Panc1 (cell line): ENCODE measurements at regions of chr5 and their contacts with region 1.

Region 1: GRCh38 chr5:74640450-74640953 is at the start of gene ENC1:
- DNase-seq: peak; percentile 43
- ATAC-seq: peak; percentile 85
- H3K4me3 ChIP-seq: peak within 1 kb of the TSS; percentile 79 to 88
- H3K27ac ChIP-seq: peak within 1 kb of the TSS; percentile 78
- H3K4me1 ChIP-seq: peaks cover 26% of the 10 kb centered on the region
- H3K27me3 ChIP-seq: no peaks in the 10 kb centered on the region
- CTCF ChIP-seq: peak; percentile 70
- total RNA-seq, gene ENC1: 37.0 TPM

Region 2: DNA sequence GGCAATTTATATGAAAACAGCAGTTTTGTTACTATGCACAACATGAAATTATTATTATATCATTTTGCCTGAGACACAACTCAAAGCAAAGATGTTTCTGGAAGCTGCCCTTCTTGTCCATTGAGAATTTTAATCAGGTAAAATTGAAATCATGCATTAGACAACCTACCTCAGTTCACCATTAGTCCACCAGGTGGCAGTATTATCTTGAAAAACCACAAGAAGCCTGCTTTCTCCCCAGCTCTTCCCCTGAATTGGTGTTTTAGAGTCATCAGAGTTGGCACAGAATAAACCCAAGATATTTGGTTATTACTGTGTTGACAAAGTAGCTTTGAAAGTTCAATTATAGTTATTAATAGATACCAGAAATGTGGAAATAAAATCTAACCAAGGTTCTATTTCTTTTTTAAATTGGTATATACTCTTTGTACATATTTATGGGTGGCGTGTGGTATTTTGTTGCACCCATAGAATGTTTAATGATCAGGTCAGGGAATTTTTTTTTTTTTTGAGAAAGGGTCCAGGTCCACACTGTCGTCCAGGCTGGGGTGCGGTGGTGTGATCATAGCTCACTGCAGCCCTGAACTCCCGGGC is 1049.3 kb before region 1 on chr5:
- CTCF ChIA-PET with region 1: no interaction called
- POLR2A ChIA-PET with region 1: no interaction called
- in situ Hi-C with region 1: no loop called
- intact Hi-C with region 1: loop called (anchors 10 kb)
- DNase-seq: peak; percentile 83
- ATAC-seq: peak; percentile 85
- H3K4me3 ChIP-seq: no peak overlapping the region
- H3K27ac ChIP-seq: no peak overlapping the region
- H3K4me1 ChIP-seq: no peaks in the 10 kb centered on the region
- H3K27me3 ChIP-seq: no peaks in the 10 kb centered on the region
- CTCF ChIP-seq: peak; percentile 76; the same call in 1 of the 2 replicates

Region 3: GRCh38 chr5:73902327-73903051 is 738.0 kb before region 1 on chr5:
- CTCF ChIA-PET with region 1: interaction called, 3 read pairs
- POLR2A ChIA-PET with region 1: no interaction called
- in situ Hi-C with region 1: no loop called
- intact Hi-C with region 1: loop called (anchors 2 kb)
- DNase-seq: peak; percentile 25
- ATAC-seq: no peak
- H3K4me3 ChIP-seq: no peak overlapping the region
- H3K27ac ChIP-seq: no peak overlapping the region
- H3K4me1 ChIP-seq: peaks cover 11% of the 10 kb centered on the region
- H3K27me3 ChIP-seq: no peaks in the 10 kb centered on the region
- CTCF ChIP-seq: peak; percentile 80

Region 4: DNA sequence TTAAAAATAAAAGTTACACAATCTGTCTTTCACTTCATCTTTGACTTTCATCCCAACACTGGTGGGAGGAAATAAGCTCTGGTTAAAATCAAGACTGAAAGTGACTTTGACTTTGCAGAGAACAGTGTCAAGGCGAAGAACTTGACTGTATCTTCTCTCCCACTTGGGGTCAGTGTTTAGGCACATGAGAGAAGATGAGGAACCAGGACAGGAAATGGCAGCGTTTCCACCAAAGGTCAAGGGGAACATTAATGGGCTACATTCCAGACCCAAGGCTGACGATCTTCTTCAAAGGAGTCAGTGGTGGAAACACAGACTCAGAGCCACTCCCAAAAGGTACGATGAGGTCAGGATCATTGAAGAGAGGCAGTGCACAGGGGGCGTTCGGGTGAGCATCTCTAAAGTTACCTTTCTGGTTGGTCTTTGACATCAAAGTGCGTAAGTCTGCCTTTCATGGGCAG is 605.0 kb before region 1 on chr5:
- CTCF ChIA-PET with region 1: interaction called, 3 read pairs
- POLR2A ChIA-PET with region 1: no interaction called
- in situ Hi-C with region 1: no loop called
- intact Hi-C with region 1: loop called (anchors 10 kb)
- DNase-seq: peak; percentile 22
- ATAC-seq: peak; percentile 64
- H3K4me3 ChIP-seq: no peak overlapping the region
- H3K27ac ChIP-seq: no peak overlapping the region
- H3K4me1 ChIP-seq: peaks cover 7% of the 10 kb centered on the region; the same call in 1 of the 2 replicates
- H3K27me3 ChIP-seq: no peaks in the 10 kb centered on the region
- CTCF ChIP-seq: peak; percentile 61

Region 5: DNA sequence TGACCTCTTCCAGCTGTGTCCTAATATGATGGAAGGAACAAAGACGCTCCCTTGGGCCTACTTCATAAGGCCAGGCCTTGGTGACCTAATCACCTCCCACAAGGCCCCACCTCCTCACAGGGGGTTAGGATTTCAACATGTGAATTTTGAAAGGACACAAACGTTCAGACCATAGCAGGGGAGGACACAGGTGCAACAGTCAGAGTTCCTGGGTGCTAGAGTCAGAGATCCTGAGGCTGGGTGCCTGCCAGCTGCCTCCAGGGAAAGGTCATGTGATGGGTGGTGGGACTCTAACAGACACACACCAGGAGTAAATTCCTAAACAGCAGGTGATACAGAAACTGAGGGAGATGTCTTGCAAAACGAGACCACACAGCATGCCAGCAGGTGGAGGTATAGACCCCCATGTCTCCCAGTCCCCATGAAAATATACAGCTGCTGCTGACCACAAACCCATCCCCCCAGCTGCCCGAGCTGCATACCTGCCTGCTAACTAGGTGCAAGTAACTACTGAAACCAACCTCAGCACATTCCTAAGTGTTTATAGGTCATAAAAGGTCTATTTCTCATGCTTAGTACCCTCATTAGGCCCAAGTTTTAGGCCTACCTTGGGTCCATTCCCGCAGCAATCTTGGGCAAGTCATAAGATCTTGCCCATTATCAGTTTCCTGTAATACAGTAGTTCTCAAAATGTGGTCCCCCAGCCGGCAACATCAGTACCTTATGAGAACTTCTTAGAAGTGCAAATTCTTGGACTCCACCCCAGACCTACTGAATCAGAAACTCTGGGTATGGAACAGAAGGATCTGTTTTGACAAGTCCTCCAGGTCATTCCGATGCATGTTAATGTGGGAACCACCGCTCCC is 245.4 kb before region 1 on chr5:
- CTCF ChIA-PET with region 1: no interaction called
- POLR2A ChIA-PET with region 1: no interaction called
- in situ Hi-C with region 1: no loop called
- intact Hi-C with region 1: loop called (anchors 10 kb)
- DNase-seq: no peak
- ATAC-seq: no peak
- H3K4me3 ChIP-seq: no peak overlapping the region
- H3K27ac ChIP-seq: no peak overlapping the region
- H3K4me1 ChIP-seq: no peaks in the 10 kb centered on the region
- H3K27me3 ChIP-seq: no peaks in the 10 kb centered on the region
- CTCF ChIP-seq: no peak

Region 6: GRCh38 chr5:74575732-74576538 is 64.6 kb before region 1 on chr5:
- CTCF ChIA-PET with region 1: interaction called, 11 read pairs
- POLR2A ChIA-PET with region 1: no interaction called
- in situ Hi-C with region 1: no loop called
- intact Hi-C with region 1: no loop called
- DNase-seq: peak; percentile 66
- ATAC-seq: peak; percentile 86
- H3K4me3 ChIP-seq: no peak overlapping the region
- H3K27ac ChIP-seq: peak overlapping the region; percentile 65
- H3K4me1 ChIP-seq: peaks cover 10% of the 10 kb centered on the region
- H3K27me3 ChIP-seq: no peaks in the 10 kb centered on the region
- CTCF ChIP-seq: no peak